Right ventricle myocardium inferior (tissue), 1 donor: ENCODE measurements at regions of chr5 and their contacts with region 1.

Region 1: DNA sequence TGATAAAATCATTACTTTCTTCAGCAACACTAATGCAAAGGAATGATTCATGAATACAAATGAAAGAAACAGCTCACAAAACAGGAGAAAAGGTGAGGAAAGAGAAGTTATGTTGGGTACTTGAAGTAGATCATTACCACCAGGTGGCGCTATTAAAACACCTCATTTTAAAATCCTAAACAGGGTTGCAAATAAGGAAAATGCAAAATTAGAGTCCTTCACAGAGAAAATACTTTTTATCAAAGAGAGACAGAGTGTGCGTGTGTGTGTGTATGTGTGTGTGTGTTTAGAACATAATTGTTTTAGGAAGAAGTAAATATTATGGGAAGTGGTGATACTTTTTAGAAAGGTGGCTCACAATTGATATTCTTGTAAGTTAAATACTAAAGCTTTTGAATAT is 49.5 kb upstream of the CD180 start:
- DNase-seq: no peak
- ATAC-seq: peak; percentile 56

Region 2: DNA sequence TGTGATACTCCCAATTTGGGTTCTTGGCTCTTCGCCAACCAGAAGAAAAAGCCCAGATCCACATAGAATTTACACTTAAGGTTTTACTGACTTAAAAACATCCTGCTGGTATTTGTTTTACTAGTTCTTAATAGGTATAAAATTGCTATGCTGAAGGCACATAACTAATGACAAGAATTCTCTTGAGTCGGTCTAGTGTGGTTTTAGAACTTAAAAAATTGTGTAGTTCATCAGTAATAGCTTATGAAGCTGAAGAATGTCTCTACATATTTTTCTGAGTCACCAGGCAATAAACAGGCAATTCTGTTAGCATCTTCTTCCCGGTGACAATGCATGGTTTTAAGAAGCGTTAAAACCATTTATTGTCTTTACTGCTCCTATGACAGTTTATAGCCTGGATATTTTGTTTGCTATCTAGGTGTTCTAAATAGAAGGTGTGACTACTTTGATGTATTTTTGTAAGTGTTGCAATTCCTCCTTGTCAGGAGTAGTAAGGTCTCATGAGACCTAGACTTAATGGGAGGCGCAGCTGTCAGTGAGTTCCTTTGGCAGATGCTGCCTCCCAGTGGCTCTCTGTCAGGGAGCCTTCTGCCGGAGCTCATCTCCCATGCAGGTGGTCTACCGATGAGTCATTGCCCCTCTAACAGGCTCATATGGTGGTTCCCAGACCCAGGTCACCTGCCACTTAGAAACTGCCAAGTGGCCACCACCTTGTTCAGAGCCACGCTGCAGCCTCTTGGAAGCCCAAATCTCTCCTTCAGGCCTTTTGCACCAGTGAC is 476.1 kb before region 1 on chr5:
- intact Hi-C with region 1: no loop called
- DNase-seq: no peak
- ATAC-seq: peak; percentile 63

Region 3: DNA sequence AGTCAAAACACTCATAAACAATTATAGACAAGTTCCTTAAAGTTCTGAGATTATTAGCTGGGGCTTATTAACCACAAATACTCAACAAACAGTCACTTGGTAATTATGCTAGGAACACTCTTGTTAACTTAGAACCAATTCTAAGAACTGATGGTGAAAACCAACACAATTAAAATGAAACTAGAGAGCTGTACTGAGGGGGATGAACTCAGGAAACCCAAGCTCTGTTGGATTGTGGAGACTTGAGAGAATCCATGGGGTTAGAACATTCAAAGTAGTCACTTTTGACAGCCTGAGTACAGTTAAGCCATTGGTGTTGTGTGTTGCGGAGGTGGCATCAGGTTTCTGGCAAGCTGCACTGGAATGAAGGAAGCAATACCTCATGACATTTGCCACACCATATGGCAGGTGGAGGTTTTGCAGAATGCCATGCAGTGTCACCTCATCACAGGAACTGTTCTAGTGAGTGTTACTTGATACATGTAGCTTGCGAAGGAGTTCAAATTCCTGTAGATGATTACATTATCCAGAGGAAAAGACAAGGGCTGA is 431.4 kb after region 1 on chr5:
- intact Hi-C with region 1: loop called (anchors 5 kb)
- DNase-seq: no peak
- ATAC-seq: no peak

Region 4: GRCh38 chr5:68215208-68215897 is 969.2 kb after region 1 on chr5 and contains the start of gene PIK3R1:
- intact Hi-C with region 1: loop called (anchors 10 kb)
- DNase-seq: peak; percentile 99
- ATAC-seq: peak; percentile 97
- total RNA-seq, gene PIK3R1: 113 TPM

Region 5: DNA sequence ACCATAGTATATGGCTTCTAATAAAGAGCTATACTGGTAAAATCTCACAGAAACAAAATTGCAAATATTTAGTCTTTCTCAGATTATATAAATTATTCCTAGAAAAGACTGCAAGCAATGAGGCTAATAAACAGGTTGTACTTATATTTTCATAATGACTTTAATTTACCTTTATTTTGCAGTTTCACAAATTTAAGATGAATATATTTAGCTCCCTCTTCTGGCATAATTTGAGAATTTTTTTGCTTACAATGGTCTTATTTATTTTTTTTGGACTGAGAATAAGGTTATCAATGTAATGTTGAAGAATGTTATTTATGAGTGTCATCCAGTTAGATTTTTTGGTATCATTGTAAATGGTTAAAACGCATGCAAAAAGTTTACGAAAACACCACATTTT is 1026.2 kb after region 1 on chr5:
- intact Hi-C with region 1: loop called (anchors 5 kb)
- DNase-seq: no peak
- ATAC-seq: no peak

Region 6: DNA sequence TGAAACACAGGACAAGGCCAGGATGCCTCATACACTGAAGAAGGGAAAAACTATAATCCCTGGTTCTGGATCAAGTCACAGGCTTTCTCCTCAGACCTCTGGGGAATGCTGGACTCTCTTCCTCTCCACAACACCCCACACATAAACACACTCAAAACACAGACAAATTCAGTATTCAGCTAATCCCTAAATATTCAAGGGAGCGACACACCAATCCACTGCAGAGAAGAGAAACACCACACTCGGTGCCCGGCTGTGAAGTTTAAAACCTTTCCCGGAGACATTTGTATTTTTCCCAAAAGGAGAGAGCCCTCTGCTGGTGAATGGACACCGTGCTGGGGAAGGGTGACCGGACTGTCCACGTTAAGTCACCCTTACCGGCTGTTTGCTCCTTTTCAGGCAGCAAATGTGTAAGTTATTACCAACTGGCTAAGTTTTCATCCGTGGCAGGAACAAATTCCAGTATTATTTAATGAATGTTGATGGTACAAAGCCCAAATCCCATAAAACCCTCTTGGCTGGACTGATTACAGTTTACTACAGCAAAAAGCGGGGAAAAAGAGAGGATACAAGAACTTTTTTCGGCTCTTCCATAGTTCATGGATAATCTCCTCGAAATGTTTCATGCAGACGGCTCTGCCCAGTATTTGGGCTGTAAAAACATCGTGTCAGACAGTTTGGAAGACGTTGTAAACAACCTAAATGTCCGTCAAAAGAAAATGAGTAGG is 1716.8 kb after region 1 on chr5:
- intact Hi-C with region 1: loop called (anchors 5 kb)
- DNase-seq: no peak
- ATAC-seq: peak; percentile 84